Activated B cell treated with CpG ODN at 0.5 μM for 24 hours (primary cell): ENCODE measurements at regions of chr5 and their contacts with region 1.

Region 1: GRCh38 chr5:170267431-170268152 is 30.0 kb downstream of the LCP2 start:
- DNase-seq: peak; percentile 60
- ATAC-seq: peak; percentile 96
- H3K4me3 Mint-ChIP-seq: peak overlapping the region; percentile 4
- H3K27ac Mint-ChIP-seq: no peak overlapping the region
- H3K4me1 Mint-ChIP-seq: peaks cover 23% of the 10 kb centered on the region
- H3K27me3 Mint-ChIP-seq: no peaks in the 10 kb centered on the region
- CTCF ChIP-seq: peak; percentile 73

Region 2: GRCh38 chr5:170100066-170100943 is 167.3 kb before region 1 on chr5:
- CTCF ChIA-PET with region 1: no interaction called
- POLR2A ChIA-PET with region 1: no interaction called
- intact Hi-C with region 1: loop called (anchors 2 kb)
- DNase-seq: peak; percentile 39
- ATAC-seq: peak; percentile 49
- H3K4me3 Mint-ChIP-seq: no peak overlapping the region
- H3K27ac Mint-ChIP-seq: no peak overlapping the region
- H3K4me1 Mint-ChIP-seq: no peaks in the 10 kb centered on the region
- H3K27me3 Mint-ChIP-seq: peaks cover 7% of the 10 kb centered on the region
- CTCF ChIP-seq: peak; percentile 45

Region 3: GRCh38 chr5:170211575-170212334 is 55.8 kb before region 1 on chr5:
- CTCF ChIA-PET with region 1: no interaction called
- POLR2A ChIA-PET with region 1: no interaction called
- intact Hi-C with region 1: no loop called
- DNase-seq: no peak
- ATAC-seq: no peak
- H3K4me3 Mint-ChIP-seq: no peak overlapping the region
- H3K27ac Mint-ChIP-seq: no peak overlapping the region
- H3K4me1 Mint-ChIP-seq: no peaks in the 10 kb centered on the region
- H3K27me3 Mint-ChIP-seq: peaks cover 28% of the 10 kb centered on the region
- CTCF ChIP-seq: no peak

Region 4: DNA sequence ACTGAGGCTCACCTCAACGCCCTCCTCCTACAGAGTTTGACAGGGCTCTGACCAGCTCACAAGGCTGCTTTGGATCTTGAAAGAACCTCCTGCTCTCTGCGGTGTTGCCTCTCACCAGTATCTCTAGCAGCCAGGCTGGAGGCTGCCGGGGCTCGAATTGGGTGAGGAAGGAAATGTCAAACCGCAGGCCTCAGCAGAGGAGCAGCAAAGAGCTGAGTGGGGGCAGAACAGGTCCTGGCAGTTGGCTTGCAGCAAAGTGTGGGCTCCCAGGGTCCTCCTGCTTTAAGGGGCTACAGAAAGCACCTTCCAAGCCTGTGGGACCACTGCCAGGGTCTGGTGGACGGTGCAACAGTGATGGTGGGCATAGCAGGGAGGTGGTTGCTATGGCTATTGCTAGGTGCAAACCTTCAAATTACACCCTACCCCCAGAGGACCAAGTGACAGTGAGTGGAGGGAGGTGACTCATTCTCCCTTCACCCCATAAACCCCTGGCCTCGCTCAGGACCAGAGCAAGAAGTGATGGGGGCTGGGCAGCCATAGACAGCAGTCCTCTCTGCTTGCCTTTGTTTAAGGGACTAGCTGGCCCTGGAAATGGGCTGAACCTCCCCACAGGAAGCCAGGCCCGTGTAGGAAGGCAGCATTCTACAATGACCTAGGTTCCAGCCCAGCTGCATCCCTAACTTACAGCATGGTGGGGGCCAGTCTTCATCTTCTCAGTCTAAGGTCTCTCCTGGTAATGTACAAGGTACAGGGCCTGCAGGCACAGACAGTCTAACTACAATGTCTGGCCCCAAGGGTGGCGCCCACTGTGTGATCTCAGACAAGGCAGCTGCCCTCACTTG is 11.2 kb after region 1 on chr5:
- CTCF ChIA-PET with region 1: interaction called, 8 read pairs
- POLR2A ChIA-PET with region 1: interaction called, 11 read pairs
- intact Hi-C with region 1: loop called (anchors 1 kb)
- DNase-seq: peak; percentile 62
- ATAC-seq: peak; percentile 86
- H3K4me3 Mint-ChIP-seq: peak overlapping the region; percentile 71
- H3K27ac Mint-ChIP-seq: peak overlapping the region; percentile 95
- H3K4me1 Mint-ChIP-seq: peaks cover 55% of the 10 kb centered on the region
- H3K27me3 Mint-ChIP-seq: no peaks in the 10 kb centered on the region
- CTCF ChIP-seq: no peak

Region 5: DNA sequence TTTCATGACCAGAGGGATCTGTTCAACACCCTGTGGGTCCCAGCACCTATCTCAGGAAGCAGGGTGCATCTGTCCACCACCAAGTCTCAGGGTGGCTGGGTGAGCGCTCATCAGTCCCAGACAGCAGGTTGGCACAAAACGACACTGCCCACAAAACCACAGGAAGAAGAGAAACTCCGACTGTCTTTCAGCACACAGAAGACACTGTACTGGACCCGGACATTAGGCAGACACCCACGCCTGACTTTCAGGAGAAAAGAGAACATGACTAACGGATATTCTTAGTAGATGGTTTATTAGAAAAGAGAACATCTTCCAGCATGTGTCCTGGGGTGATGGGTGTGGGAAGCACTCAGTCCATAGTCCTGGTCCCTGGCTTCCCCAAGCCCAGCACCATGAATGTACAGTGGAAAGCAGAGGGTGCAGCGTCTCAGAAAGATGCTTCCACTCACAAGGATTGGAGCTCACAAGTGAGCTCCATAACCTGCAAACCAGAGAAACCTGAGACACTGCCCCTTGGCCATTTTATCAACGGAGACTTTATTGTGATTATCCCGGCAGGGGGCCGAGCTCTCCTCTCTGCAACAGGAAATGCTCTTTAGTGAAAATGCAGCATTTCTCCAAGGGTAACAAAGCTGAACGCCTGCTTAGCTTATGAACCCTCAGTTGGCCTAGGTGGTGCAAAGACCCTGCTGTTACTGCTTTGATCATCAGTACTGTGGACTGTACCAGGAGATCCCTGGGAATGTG is 65.7 kb after region 1 on chr5:
- CTCF ChIA-PET with region 1: interaction called, 289 read pairs
- POLR2A ChIA-PET with region 1: interaction called, 9 read pairs
- intact Hi-C with region 1: no loop called
- DNase-seq: no peak
- ATAC-seq: no peak
- H3K4me3 Mint-ChIP-seq: peak overlapping the region; percentile 25
- H3K27ac Mint-ChIP-seq: no peak overlapping the region
- H3K4me1 Mint-ChIP-seq: peaks cover 10% of the 10 kb centered on the region
- H3K27me3 Mint-ChIP-seq: no peaks in the 10 kb centered on the region
- CTCF ChIP-seq: no peak

Region 6: GRCh38 chr5:170420780-170421412 is 153.3 kb after region 1 on chr5:
- CTCF ChIA-PET with region 1: interaction called, 26 read pairs
- POLR2A ChIA-PET with region 1: no interaction called
- intact Hi-C with region 1: loop called (anchors 1 kb)
- DNase-seq: no peak
- ATAC-seq: peak; percentile 58
- H3K4me3 Mint-ChIP-seq: no peak overlapping the region
- H3K27ac Mint-ChIP-seq: no peak overlapping the region
- H3K4me1 Mint-ChIP-seq: peaks cover 4% of the 10 kb centered on the region
- H3K27me3 Mint-ChIP-seq: peaks cover 23% of the 10 kb centered on the region
- CTCF ChIP-seq: peak; percentile 35